PC-3 (cell line): ENCODE measurements at regions of chr1 and their contacts with region 1.

Region 1: GRCh38 chr1:158103861-158104522 is 76.7 kb upstream of the CD1D start:
- DNase-seq: no peak
- ATAC-seq: no peak
- H3K4me3 ChIP-seq: no peak overlapping the region
- H3K27ac ChIP-seq: no peak overlapping the region
- H3K4me1 ChIP-seq: peaks cover 8% of the 10 kb centered on the region
- H3K27me3 ChIP-seq: peaks cover 22% of the 10 kb centered on the region; the same call in 1 of the 2 replicates
- CTCF ChIP-seq: no peak

Region 2: DNA sequence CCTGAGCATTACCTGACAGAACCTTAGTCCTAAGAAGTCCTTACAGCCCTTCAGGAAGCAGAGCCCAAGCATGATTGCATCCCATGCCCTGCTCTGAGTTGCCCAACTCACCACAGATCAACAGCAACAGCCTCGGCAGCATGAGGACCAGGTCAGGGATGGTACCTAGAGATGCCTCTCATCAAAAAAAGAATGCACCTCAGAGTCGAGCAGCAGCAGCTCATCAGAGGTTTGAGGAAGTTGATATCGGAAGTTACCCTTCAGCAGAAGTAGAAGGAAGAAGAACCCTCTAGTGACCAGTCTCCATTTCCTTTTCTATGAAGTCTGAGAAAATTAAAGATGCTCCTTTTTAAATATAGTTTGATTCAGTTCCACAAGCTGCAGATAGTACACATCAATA is 284.1 kb before region 1 on chr1 and contains the start of gene FCRL1:
- CTCF ChIA-PET with region 1: no interaction called
- POLR2A ChIA-PET with region 1: no interaction called
- intact Hi-C with region 1: no loop called
- DNase-seq: no peak
- ATAC-seq: no peak
- H3K4me3 ChIP-seq: no peak within 1 kb of the TSS
- H3K27ac ChIP-seq: no peak within 1 kb of the TSS
- H3K4me1 ChIP-seq: no peaks in the 10 kb centered on the region
- H3K27me3 ChIP-seq: peaks cover 48% of the 10 kb centered on the region
- CTCF ChIP-seq: no peak
- total RNA-seq, gene FCRL1: not detected in 2 replicates

Region 3: GRCh38 chr1:157955857-157956256 is 148.1 kb before region 1 on chr1:
- CTCF ChIA-PET with region 1: no interaction called
- POLR2A ChIA-PET with region 1: interaction called, 13 read pairs
- intact Hi-C with region 1: no loop called
- DNase-seq: no peak
- ATAC-seq: no peak
- H3K4me3 ChIP-seq: no peak overlapping the region
- H3K27ac ChIP-seq: no peak overlapping the region
- H3K4me1 ChIP-seq: no peaks in the 10 kb centered on the region
- H3K27me3 ChIP-seq: peaks cover 92% of the 10 kb centered on the region
- CTCF ChIP-seq: no peak

Region 4: GRCh38 chr1:158150523-158150922 is 46.5 kb after region 1 on chr1:
- CTCF ChIA-PET with region 1: interaction called, 10 read pairs
- POLR2A ChIA-PET with region 1: no interaction called
- intact Hi-C with region 1: no loop called
- DNase-seq: no peak
- ATAC-seq: no peak
- H3K4me3 ChIP-seq: no peak overlapping the region
- H3K27ac ChIP-seq: no peak overlapping the region
- H3K4me1 ChIP-seq: no peaks in the 10 kb centered on the region
- H3K27me3 ChIP-seq: peaks cover 81% of the 10 kb centered on the region
- CTCF ChIP-seq: no peak